ENCODE measurements at regions of chr5 and their contacts with region 1.

Region 1: GRCh38 chr5:61331407-61332357 is at the start of gene ZSWIM6:
- DNase-seq: peak; percentile 99
- H3K4me3 ChIP-seq: peak within 1 kb of the TSS; percentile 92
- H3K27ac ChIP-seq: peak within 1 kb of the TSS; percentile 86
- H3K4me1 ChIP-seq: peaks cover 40% of the 10 kb centered on the region
- H3K27me3 ChIP-seq: no peaks in the 10 kb centered on the region
- CTCF ChIP-seq: no peak
- total RNA-seq, gene ZSWIM6: 43.9 and 47.3 TPM in 2 replicates

Region 2: GRCh38 chr5:60960591-60960990 is 371.1 kb before region 1 on chr5:
- CTCF ChIA-PET with region 1: no interaction called
- POLR2A ChIA-PET with region 1: no interaction called
- intact Hi-C with region 1: loop called (anchors 5 kb)
- DNase-seq: peak; percentile 43
- H3K4me3 ChIP-seq: no peak overlapping the region
- H3K27ac ChIP-seq: no peak overlapping the region
- H3K4me1 ChIP-seq: peaks cover 22% of the 10 kb centered on the region
- H3K27me3 ChIP-seq: no peaks in the 10 kb centered on the region
- CTCF ChIP-seq: peak; percentile 75

Region 3: GRCh38 chr5:61100437-61100836 is 231.2 kb before region 1 on chr5:
- CTCF ChIA-PET with region 1: no interaction called
- POLR2A ChIA-PET with region 1: no interaction called
- intact Hi-C with region 1: no loop called
- DNase-seq: no peak
- H3K4me3 ChIP-seq: no peak overlapping the region
- H3K27ac ChIP-seq: no peak overlapping the region
- H3K4me1 ChIP-seq: peaks cover 2% of the 10 kb centered on the region
- H3K27me3 ChIP-seq: no peaks in the 10 kb centered on the region
- CTCF ChIP-seq: no peak

Region 4: GRCh38 chr5:61167382-61167781 is 164.3 kb before region 1 on chr5:
- CTCF ChIA-PET with region 1: no interaction called
- POLR2A ChIA-PET with region 1: no interaction called
- intact Hi-C with region 1: loop called (anchors 5 kb)
- DNase-seq: peak; percentile 63
- H3K4me3 ChIP-seq: no peak overlapping the region
- H3K27ac ChIP-seq: no peak overlapping the region
- H3K4me1 ChIP-seq: peaks cover 7% of the 10 kb centered on the region
- H3K27me3 ChIP-seq: no peaks in the 10 kb centered on the region
- CTCF ChIP-seq: peak; percentile 67

Region 5: DNA sequence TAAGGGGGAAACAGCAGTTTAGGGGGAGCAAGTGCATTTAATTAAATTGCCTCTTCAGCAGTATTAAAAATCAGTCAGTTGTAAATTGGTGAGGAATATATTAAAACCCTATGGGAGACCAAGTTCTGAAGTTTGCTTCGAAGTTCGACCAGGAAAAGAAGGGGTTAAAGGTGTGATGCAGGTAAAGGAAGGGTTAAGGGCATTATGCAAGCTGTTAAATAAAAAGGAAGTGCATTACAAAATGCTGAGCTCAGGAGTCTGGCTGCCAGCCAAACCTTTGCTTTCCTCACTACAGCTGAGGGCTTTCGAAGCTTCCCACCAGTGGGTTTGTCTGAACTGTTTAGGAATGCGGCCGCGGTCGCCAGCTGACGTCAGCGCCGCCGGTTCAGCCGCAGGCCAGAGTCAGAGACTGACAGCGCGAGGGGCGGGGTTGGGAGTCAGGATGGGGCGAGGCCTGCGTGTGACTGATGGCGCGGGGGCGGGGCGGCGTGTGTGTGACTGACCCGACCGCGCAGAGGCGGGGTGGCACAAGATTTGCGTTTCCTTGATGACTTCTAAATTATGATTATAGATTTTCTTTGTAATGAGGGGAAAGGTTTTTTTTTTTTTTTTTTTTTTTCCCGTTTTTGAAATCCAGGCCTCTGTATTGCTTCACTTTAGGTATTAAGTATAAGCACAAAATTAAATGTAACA is 76.9 kb after region 1 on chr5:
- CTCF ChIA-PET with region 1: no interaction called
- POLR2A ChIA-PET with region 1: no interaction called
- intact Hi-C with region 1: loop called (anchors 2 kb)
- DNase-seq: peak; percentile 99
- H3K4me3 ChIP-seq: peak overlapping the region; percentile 33
- H3K27ac ChIP-seq: peak overlapping the region; percentile 32
- H3K4me1 ChIP-seq: peaks cover 44% of the 10 kb centered on the region
- H3K27me3 ChIP-seq: no peaks in the 10 kb centered on the region
- CTCF ChIP-seq: no peak

Region 6: DNA sequence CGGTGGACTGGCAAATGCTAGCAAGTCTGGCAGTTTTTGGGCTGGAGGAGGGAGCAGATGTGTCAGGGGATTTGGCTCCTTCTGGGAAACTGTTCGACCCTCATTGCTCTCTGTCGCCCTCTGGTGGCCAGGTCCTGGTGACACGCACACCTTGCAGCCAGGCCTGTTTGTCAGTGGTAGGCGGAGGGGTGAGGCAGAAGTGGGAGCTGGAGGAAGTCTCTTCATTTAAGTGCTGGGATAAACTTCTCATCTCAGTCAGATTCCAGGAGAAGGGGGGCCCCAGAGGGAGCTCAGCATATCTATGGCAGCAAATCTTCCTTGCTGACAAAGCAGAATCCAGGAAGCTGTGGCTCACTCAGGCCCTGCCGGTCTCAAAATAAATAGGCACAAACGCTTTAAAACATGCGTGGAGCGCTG is 326.9 kb after region 1 on chr5:
- CTCF ChIA-PET with region 1: interaction called, 4 read pairs
- POLR2A ChIA-PET with region 1: no interaction called
- intact Hi-C with region 1: loop called (anchors 10 kb)
- DNase-seq: peak; percentile 86
- H3K4me3 ChIP-seq: no peak overlapping the region
- H3K27ac ChIP-seq: no peak overlapping the region
- H3K4me1 ChIP-seq: peaks cover 30% of the 10 kb centered on the region
- H3K27me3 ChIP-seq: no peaks in the 10 kb centered on the region
- CTCF ChIP-seq: peak; percentile 97

Region 7: GRCh38 chr5:61823781-61824180 is 492.1 kb after region 1 on chr5:
- CTCF ChIA-PET with region 1: no interaction called
- POLR2A ChIA-PET with region 1: no interaction called
- intact Hi-C with region 1: loop called (anchors 10 kb)
- DNase-seq: no peak
- H3K4me3 ChIP-seq: no peak overlapping the region
- H3K27ac ChIP-seq: no peak overlapping the region
- H3K4me1 ChIP-seq: peaks cover 15% of the 10 kb centered on the region
- H3K27me3 ChIP-seq: no peaks in the 10 kb centered on the region
- CTCF ChIP-seq: no peak

Region 8: DNA sequence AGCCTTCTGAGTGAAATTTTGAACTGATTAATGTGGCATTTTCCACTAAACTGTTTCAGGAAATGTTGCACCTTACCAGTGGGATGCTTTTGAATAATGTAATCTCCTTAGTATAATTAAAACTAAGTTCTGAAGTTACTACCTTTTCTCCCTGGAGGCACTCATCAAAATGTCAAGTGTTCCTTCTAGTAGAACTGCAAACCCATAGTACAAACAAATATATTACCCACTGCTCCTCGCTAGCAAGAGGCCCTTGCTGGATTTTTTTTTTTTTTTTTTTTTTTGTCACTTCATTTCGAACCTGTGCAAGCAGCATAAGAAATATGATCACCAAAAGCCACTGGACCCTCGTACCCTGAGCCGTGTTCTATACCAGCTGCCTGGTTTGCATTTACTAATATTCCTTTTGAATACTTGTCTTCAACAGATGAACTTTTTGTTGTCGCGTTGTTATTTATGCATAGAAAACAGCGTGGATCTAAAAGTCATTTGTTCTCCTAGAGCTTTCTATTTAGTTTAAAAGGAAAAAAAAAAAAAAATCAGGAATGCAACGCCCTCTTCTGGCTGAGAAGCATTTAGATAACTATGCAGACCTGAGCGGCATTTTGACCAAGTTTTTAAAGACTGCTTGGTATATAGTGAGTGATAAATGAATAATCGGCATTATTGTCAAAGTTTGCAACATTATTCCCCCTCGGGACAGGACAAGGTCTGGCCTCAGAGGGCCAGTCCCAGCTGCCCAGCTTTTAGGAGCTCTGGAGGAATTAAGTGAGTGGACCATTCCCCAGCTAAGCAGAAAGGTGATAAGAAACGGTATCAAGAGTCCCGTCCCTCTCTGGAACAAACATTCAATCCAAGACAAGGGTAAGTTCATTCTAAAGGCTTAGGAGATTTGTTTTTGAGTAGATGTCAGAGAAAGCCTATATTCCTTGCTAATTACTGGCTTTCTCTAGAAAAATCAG is 811.9 kb after region 1 on chr5:
- CTCF ChIA-PET with region 1: no interaction called
- POLR2A ChIA-PET with region 1: no interaction called
- intact Hi-C with region 1: no loop called
- DNase-seq: peak; percentile 72
- H3K4me3 ChIP-seq: peak overlapping the region; percentile 12
- H3K27ac ChIP-seq: no peak overlapping the region
- H3K4me1 ChIP-seq: peaks cover 21% of the 10 kb centered on the region
- H3K27me3 ChIP-seq: no peaks in the 10 kb centered on the region
- CTCF ChIP-seq: peak; percentile 84